K562 (cell line): ENCODE measurements at regions of chr1 and their contacts with region 1.

Region 1: GRCh38 chr1:39204441-39205081 is at the start of gene MACF1:
- DNase-seq: peak; percentile 57 to 89 (median 68)
- ATAC-seq: peak; percentile 79
- H3K4me3 ChIP-seq: peak within 1 kb of the TSS; percentile 39
- H3K27ac ChIP-seq: peak within 1 kb of the TSS; percentile 81
- H3K4me1 ChIP-seq: peaks cover 17 to 28% of the 10 kb centered on the region in 2 experiments
- H3K27me3 ChIP-seq: no peaks in the 10 kb centered on the region
- CTCF ChIP-seq: peak; percentile 34 to 47 (median 45); a peak in 5 of 6 replicates
- EP300 ChIP-seq: peak; percentile 53; the same call in 1 of the 2 replicates
- POLR2A ChIP-seq: 0 out of 2 replicates have a peak, but pooled peaks have one; percentile 35
- RAD21 ChIP-seq: peak; percentile 21 to 64; a peak in 3 of 4 replicates
- polyA plus RNA-seq, gene MACF1: 13.2 to 21.2 TPM

Region 2: GRCh38 chr1:39158327-39159086 is 46.1 kb before region 1 on chr1:
- CTCF ChIA-PET with region 1: no interaction called
- POLR2A ChIA-PET with region 1: no interaction called
- in situ Hi-C with region 1: no loop called
- intact Hi-C with region 1: no loop called
- DNase-seq: peak; percentile 51 to 93 (median 66)
- ATAC-seq: peak; percentile 91
- H3K4me3 ChIP-seq: peak overlapping the region; percentile 47
- H3K27ac ChIP-seq: peak overlapping the region; percentile 82
- H3K4me1 ChIP-seq: peaks cover 9 to 35% of the 10 kb centered on the region in 2 experiments; a peak in 4 of 5 replicates
- H3K27me3 ChIP-seq: no peaks in the 10 kb centered on the region
- CTCF ChIP-seq: no peak
- EP300 ChIP-seq: peak; percentile 14; the same call in 1 of the 2 replicates
- POLR2A ChIP-seq: peak; percentile 80
- RAD21 ChIP-seq: 0 out of 4 replicates have a peak, but pooled peaks of 1 of the 2 experiments have one; percentile 6

Region 3: DNA sequence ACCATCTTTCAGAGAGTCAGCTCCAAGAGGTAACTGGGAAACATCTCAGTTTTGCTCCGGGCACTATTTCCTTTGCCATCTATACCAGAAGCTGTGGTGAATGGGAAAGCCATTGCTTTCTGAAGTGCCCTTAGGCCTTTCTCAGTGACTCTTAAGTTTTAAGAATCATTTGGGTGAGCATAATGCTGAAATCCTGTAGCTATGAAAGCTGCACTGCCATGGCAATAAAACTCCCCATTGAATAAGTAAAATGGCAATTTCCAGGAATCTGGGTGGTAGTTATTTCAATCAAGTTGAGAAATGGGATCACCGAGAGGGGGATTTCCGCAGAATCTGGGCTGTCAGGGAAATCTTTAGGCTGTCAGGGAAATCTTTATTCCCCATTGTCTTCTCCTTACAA is 26.9 kb before region 1 on chr1:
- CTCF ChIA-PET with region 1: no interaction called
- POLR2A ChIA-PET with region 1: no interaction called
- in situ Hi-C with region 1: no loop called
- intact Hi-C with region 1: no loop called
- DNase-seq: no peak
- ATAC-seq: no peak
- H3K4me3 ChIP-seq: no peak overlapping the region
- H3K27ac ChIP-seq: no peak overlapping the region
- H3K4me1 ChIP-seq: peaks cover 8 to 33% of the 10 kb centered on the region in 2 experiments
- H3K27me3 ChIP-seq: no peaks in the 10 kb centered on the region
- CTCF ChIP-seq: no peak
- EP300 ChIP-seq: no peak
- POLR2A ChIP-seq: no peak
- RAD21 ChIP-seq: no peak

Region 4: GRCh38 chr1:39214998-39215873 is 10.7 kb after region 1 on chr1:
- CTCF ChIA-PET with region 1: no interaction called
- POLR2A ChIA-PET with region 1: interaction called, 61 read pairs
- in situ Hi-C with region 1: no loop called
- intact Hi-C with region 1: no loop called
- DNase-seq: peak; percentile 59 to 81 (median 64)
- ATAC-seq: peak; percentile 77
- H3K4me3 ChIP-seq: peak overlapping the region; percentile 36
- H3K27ac ChIP-seq: peak overlapping the region; percentile 79
- H3K4me1 ChIP-seq: peaks cover 23 to 57% of the 10 kb centered on the region in 2 experiments
- H3K27me3 ChIP-seq: no peaks in the 10 kb centered on the region; a peak in 1 of 5 replicates
- CTCF ChIP-seq: no peak
- EP300 ChIP-seq: no peak
- POLR2A ChIP-seq: peak; percentile 64
- RAD21 ChIP-seq: no peak

Region 5: GRCh38 chr1:39220891-39221870 is 16.6 kb after region 1 on chr1:
- CTCF ChIA-PET with region 1: no interaction called
- POLR2A ChIA-PET with region 1: interaction called, 61 read pairs
- in situ Hi-C with region 1: no loop called
- intact Hi-C with region 1: no loop called
- DNase-seq: no peak
- ATAC-seq: no peak
- H3K4me3 ChIP-seq: no peak overlapping the region
- H3K27ac ChIP-seq: no peak overlapping the region
- H3K4me1 ChIP-seq: peaks cover 10 to 28% of the 10 kb centered on the region in 2 experiments
- H3K27me3 ChIP-seq: no peaks in the 10 kb centered on the region
- CTCF ChIP-seq: no peak
- EP300 ChIP-seq: no peak
- POLR2A ChIP-seq: no peak
- RAD21 ChIP-seq: no peak

Region 6: DNA sequence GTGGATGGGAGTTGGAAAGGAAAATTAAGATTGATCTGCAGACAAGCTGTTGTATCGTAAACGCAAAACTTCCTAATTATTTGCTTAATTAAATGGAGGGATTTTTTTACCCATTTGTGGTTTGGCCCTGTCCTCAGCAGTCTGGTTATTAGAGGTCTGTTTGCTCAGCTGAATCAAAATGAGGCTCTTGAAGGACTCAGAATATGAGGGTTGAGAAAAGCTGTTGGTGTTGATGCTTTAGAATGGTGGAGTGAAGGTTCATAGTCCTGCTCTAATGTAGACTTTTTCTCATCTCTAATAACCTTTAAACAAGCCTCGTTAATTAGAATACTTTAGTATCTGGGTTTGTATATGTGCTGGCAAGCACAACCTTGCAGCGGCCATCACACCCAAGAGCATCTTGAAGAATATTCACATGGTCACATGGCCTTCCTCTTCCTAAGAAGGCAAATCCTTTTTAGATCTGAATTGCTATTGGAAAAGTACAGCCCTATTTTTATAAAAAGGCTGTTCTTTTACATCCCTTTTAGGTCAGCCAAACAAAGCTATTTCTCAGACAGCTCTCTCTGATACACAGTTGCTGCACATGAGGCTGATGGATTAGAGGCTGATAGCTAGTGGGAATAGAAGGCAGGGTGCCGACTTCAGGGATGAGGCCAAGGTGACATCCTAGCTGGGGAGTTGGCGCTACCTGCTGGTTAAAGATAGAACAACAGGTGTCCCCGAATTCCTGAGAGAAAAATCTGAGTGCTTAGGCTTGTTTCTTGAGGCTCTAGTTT is 53.8 kb after region 1 on chr1:
- CTCF ChIA-PET with region 1: interaction called, 5 read pairs
- POLR2A ChIA-PET with region 1: interaction called, 3 read pairs
- in situ Hi-C with region 1: no loop called
- intact Hi-C with region 1: loop called (anchors 1 kb)
- DNase-seq: peak; percentile 78 to 85 (median 82)
- ATAC-seq: peak; percentile 92
- H3K4me3 ChIP-seq: no peak overlapping the region
- H3K27ac ChIP-seq: no peak overlapping the region
- H3K4me1 ChIP-seq: no peaks in the 10 kb centered on the region
- H3K27me3 ChIP-seq: no peaks in the 10 kb centered on the region
- CTCF ChIP-seq: peak; percentile 89 to 97 (median 95)
- EP300 ChIP-seq: no peak
- POLR2A ChIP-seq: no peak
- RAD21 ChIP-seq: peak; percentile 97 to 99